Calu3 (cell line): ENCODE measurements at regions of chr20 and their contacts with region 1.

Region 1: DNA sequence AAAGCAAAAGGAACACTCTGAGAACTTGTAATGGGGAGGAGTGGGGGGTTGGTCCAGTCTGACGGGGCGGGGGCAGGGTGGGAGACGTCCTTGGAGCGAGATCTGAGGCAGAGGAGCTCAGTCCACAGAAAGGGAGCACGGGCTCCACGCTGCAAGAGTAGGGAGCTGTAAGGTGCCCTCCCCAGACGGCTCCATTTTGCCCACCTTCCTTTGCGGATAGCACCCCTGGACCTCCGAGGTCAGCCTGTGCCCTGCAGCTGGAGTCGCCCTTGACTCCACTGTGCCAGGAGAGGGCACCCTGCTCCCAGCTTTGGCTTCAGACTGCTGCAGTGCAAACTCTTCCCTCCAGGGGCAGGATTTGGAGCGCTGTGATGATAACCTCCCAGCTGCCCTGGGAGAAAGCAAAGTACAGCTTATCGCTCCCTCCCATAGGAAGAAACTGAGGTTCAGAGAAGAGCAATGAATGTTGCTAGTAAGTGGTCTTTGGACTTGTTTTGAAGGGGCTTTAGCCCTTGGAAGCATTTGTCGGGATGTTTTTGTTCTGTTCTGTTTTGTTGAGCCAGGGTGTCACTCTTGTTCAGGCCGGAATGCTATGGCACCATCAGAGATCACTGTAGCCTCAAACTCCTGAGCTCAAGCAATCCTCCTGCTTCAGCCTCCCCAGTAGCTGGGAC is 9.5 kb upstream of the AHCY start:
- DNase-seq: peak; percentile 97
- H3K4me3 Mint-ChIP-seq: peak overlapping the region; percentile 67
- H3K27ac Mint-ChIP-seq: peak overlapping the region; percentile 34
- H3K4me1 Mint-ChIP-seq: peaks cover 61% of the 10 kb centered on the region
- H3K27me3 Mint-ChIP-seq: no peaks in the 10 kb centered on the region
- CTCF ChIP-seq: peak; percentile 100

Region 2: GRCh38 chr20:34363062-34363464 is 50.4 kb after region 1 on chr20 and contains the start of gene ITCH:
- CTCF ChIA-PET with region 1: interaction called, 50 read pairs
- intact Hi-C with region 1: no loop called
- DNase-seq: peak; percentile 98
- H3K4me3 Mint-ChIP-seq: peak within 1 kb of the TSS; percentile 76
- H3K27ac Mint-ChIP-seq: peak within 1 kb of the TSS; percentile 84
- H3K4me1 Mint-ChIP-seq: peaks cover 42% of the 10 kb centered on the region
- H3K27me3 Mint-ChIP-seq: no peaks in the 10 kb centered on the region
- CTCF ChIP-seq: no peak
- total RNA-seq, gene ITCH: 90.1 and 91.6 TPM in 2 replicates

Region 3: DNA sequence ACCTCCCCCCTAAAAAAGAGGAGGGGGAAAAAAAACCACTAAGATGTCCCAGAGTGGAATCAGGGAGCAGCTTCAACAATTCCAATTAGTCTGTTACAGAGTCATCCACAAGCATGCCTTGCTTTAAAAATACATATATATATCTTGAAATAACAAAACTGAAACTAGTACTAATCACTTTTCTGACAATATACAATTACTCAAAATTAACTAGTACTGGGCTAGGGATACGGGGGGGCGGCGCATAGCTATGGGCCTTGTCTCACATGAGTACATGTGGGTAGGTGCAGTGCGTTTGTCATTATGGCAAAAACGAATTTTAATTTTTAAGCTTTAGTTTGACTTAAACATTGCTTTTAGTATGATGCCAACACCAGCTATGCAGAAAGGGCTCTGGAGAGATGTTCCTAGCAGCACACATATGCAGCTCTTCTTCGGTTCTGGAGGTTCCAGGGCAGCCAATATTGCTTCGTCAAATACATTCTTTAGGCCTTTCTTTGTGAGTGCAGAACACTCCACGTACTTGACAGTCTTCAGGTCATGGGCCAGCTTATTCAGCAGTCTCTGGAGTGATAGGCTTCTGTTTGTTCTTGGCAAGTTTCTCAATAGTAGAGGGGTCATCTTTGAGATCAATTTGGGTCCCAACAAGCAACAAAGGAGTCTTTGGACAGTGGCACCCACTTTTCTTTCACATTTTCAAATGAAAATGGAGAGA is 89.2 kb after region 1 on chr20:
- CTCF ChIA-PET with region 1: interaction called, 10 read pairs
- intact Hi-C with region 1: no loop called
- DNase-seq: no peak
- H3K4me3 Mint-ChIP-seq: no peak overlapping the region
- H3K27ac Mint-ChIP-seq: no peak overlapping the region
- H3K4me1 Mint-ChIP-seq: peaks cover 56% of the 10 kb centered on the region
- H3K27me3 Mint-ChIP-seq: no peaks in the 10 kb centered on the region
- CTCF ChIP-seq: no peak

Region 4: DNA sequence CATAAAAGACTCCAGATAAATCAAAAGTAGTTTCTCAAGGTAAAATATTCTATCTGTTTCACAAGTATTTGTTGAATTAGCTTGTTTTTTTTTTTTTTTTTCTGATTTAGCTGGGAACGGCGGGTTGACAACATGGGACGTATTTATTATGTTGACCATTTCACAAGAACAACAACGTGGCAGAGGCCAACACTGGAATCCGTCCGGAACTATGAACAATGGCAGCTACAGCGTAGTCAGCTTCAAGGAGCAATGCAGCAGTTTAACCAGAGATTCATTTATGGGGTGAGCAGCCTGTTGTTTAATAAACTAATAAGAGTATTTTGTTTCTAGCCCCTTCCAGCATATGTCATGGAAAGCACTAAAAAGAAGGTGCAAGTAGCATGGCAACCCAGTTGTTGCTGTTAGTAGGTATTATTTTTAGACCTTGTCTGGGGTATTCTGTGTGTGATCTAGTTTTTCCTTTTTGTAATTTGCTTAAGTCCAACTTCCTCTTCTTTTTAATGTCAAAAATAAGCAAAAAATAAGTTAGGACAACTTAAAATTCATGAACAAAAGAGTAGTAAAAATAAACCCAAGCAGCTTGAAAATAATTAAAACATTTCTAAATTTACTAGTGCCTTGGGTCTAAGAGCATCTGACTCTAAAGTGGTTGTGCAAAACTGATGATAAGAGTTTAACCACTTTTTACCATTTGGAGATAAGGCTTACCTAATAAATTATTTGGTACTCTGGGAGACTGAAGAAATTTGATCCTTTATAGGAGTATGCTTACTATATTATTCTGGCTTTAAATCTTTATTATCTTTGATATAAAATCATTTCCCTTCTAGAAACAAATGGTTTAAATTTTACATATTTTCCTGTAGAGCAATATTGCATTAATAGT is 132.7 kb after region 1 on chr20:
- CTCF ChIA-PET with region 1: interaction called, 6 read pairs
- intact Hi-C with region 1: loop called (anchors 5 kb)
- DNase-seq: no peak
- H3K4me3 Mint-ChIP-seq: no peak overlapping the region
- H3K27ac Mint-ChIP-seq: no peak overlapping the region
- H3K4me1 Mint-ChIP-seq: no peaks in the 10 kb centered on the region
- H3K27me3 Mint-ChIP-seq: no peaks in the 10 kb centered on the region
- CTCF ChIP-seq: no peak

Region 5: DNA sequence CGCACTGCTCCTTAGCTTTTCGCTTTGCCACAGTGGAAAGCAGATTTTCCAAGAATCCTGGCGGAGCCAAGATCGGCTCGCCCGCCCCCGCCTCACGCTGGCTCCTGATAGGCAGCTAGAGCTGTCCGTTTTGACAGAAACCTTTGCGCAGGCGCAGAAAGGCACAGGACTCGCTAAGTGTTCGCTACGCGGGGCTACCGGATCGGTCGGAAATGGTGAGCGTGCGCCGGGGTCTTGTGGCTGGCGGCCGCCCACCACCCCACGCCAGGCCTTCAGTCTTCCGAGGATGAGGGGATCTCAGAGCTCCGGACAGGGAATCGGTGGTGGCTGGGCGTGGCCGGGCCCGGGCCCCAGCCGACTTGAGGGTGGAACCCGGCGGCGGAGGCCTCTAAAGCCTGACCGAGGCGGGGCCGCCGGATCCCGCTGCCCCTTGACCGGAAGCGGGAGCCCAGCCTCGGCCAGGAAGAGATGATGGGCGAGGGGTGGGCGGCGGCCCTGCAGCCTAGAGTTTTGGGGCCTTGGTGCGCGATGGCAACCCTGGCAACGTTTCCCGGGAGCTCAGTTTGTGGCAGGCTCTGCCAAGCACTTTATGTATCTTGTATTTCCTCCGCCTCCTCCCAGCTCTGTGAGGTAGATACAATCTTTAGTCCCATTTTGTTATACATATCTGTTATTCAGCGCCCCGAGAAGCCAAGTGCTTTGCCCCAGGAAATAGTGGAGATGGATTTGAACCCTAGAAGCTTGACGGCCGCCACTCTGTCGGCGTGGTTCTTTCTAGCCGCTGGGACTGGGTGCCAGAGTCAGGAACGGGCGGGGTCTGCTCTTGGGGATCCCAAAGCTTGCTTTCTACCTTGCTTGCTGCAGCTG is 203.8 kb after region 1 on chr20 and contains the start of gene DYNLRB1:
- CTCF ChIA-PET with region 1: interaction called, 22 read pairs
- intact Hi-C with region 1: no loop called
- DNase-seq: peak; percentile 99
- H3K4me3 Mint-ChIP-seq: peak within 1 kb of the TSS; percentile 83
- H3K27ac Mint-ChIP-seq: peak within 1 kb of the TSS; percentile 82
- H3K4me1 Mint-ChIP-seq: peaks cover 56% of the 10 kb centered on the region
- H3K27me3 Mint-ChIP-seq: no peaks in the 10 kb centered on the region
- CTCF ChIP-seq: no peak
- total RNA-seq, gene DYNLRB1: 214 and 229 TPM in 2 replicates

Region 6: DNA sequence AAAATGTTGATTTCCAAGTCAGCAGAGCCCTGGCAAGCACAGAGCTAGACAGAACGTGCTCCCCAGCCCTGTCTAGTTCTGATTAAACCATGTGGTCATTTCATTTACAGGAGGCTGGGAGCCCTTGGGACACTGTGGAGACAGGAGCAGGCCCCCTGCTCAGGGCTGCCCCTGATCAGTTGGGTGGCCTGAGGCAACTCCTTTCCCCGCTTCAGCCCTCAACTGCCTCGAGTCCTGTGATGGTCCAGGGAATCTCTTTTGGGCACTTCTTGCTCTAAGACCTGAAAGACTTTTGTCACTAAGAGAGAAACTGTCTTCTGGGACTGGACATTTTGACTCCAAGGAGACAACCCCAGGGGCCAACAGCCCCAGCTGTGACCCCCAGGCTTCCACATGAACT is 217.1 kb after region 1 on chr20:
- CTCF ChIA-PET with region 1: interaction called, 11 read pairs
- intact Hi-C with region 1: no loop called
- DNase-seq: no peak
- H3K4me3 Mint-ChIP-seq: no peak overlapping the region
- H3K27ac Mint-ChIP-seq: peak overlapping the region; percentile 53
- H3K4me1 Mint-ChIP-seq: peaks cover 51% of the 10 kb centered on the region
- H3K27me3 Mint-ChIP-seq: no peaks in the 10 kb centered on the region
- CTCF ChIP-seq: no peak